Mammary epithelial cell (primary cell): ENCODE measurements at regions of chr1 and their contacts with region 1.

Region 1: DNA sequence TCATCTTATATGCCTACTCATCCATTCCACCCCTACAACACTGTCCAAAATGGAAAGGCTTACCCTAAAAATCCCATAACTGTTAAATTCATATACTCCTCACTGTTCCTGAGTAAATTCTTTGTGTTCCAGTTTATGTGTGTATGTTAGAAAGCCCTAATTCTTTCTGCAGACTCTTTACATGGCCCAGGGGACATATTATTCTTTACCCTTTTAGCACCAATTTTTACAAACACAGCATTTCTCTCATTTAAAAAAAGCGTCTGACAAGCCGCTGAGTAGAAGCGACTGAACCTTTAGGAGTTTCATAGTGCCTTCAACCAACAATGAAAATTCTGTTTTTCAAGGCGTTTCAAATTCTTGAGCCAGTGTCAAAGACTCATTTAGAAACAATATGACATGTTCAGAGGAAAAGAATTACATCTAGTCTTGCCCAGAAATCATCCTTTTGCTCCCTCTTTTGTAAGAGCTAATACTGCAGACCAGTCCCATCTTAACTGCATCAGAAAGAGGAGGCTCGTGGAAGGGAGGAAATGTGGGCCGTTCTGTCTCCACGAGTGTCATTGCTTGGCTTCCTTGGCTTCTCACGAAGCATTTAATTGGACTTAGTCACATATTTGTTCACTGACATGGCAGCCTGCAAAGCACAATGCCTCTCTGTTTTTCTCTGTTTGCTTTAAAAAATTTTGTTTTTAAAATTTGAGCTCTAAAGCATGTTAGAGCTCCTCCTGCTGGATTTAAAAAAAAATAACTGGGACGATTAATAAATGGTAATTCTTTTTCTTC is 21.3 kb upstream of the C1orf105 start:
- DNase-seq: peak; percentile 84
- H3K4me3 ChIP-seq: no peak overlapping the region
- H3K27ac ChIP-seq: peak overlapping the region; percentile 68
- H3K4me1 ChIP-seq: peaks cover 23% of the 10 kb centered on the region
- H3K27me3 ChIP-seq: no peaks in the 10 kb centered on the region
- CTCF ChIP-seq: peak; percentile 46 to 53

Region 2: DNA sequence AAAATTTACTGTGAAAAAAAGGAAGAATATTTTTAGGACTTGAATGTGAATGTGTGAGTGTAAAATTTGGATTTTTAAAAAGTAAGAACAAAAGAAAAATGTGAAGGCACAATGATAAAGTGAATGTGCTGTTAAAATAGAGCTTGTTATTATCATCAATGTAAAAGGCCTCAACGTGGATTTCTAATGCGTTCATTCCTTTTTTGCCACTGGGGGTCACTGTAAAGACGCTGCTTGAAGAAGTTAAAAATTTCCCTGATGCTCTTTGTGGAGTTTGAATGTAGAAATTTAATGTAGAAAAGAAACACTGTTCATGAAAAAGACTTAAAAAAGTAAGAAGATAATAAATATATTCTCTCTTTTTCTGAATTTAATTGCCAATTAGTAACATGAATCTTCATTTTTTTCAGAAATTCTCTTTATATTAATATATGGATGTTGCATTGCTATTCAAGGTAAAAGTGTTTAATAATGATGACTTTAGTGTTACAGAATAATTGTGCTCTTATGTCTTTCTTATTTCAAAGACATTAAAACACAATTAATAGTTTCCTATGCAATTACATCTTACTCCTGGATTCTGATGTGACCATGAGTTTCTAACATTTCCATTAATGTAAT is 396.3 kb before region 1 on chr1:
- CTCF ChIA-PET with region 1: interaction called, 8 read pairs
- dilution Hi-C with region 1: no loop called
- in situ Hi-C with region 1: loop called in 1 of 2 experiments (anchors 25 kb)
- intact Hi-C with region 1: loop called (anchors 1 kb)
- DNase-seq: peak; percentile 40
- H3K4me3 ChIP-seq: no peak overlapping the region
- H3K27ac ChIP-seq: no peak overlapping the region
- H3K4me1 ChIP-seq: peaks cover 45% of the 10 kb centered on the region
- H3K27me3 ChIP-seq: no peaks in the 10 kb centered on the region
- CTCF ChIP-seq: peak; percentile 76 to 80

Region 3: DNA sequence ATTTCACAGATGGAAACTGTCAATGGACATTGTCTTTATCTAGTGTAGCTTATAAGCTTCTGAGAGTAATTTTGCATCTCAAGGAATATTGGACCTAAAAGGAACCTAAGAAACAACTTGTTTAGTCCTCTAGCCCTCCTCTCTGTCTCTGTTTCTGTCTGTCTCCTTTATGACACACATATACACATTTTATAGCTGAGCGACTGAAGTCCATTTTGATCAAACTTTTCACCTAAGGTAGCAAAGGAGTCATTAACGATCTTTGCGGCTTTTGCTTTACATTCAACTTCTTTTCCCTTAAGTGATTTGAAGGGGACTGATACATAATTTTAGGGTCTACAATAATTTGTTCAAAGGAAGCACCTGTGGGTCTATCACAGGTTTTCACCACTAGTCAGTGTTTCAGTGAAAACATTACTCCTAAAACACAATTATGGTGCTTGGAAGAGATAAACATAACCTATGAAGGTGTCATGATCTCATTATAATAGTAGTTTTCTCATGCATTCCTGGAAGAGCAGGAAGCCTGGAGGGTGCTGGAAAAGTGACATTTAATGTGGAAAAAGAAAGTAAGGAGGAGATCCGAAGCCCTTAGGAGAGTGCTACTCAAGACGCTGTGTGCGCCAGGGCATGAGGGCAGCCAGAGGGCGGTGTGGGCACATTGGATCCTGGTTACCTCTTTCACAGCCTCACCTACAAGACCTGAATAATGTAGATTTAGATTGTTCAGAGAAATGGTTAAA is 309.2 kb before region 1 on chr1:
- CTCF ChIA-PET with region 1: no interaction called
- dilution Hi-C with region 1: loop called (anchors 25 kb)
- in situ Hi-C with region 1: loop called (anchors 10 to 25 kb)
- intact Hi-C with region 1: loop called (anchors 1 kb)
- DNase-seq: peak; percentile 53
- H3K4me3 ChIP-seq: no peak overlapping the region
- H3K27ac ChIP-seq: no peak overlapping the region
- H3K4me1 ChIP-seq: no peaks in the 10 kb centered on the region
- H3K27me3 ChIP-seq: no peaks in the 10 kb centered on the region
- CTCF ChIP-seq: peak; percentile 92 to 96

Region 4: DNA sequence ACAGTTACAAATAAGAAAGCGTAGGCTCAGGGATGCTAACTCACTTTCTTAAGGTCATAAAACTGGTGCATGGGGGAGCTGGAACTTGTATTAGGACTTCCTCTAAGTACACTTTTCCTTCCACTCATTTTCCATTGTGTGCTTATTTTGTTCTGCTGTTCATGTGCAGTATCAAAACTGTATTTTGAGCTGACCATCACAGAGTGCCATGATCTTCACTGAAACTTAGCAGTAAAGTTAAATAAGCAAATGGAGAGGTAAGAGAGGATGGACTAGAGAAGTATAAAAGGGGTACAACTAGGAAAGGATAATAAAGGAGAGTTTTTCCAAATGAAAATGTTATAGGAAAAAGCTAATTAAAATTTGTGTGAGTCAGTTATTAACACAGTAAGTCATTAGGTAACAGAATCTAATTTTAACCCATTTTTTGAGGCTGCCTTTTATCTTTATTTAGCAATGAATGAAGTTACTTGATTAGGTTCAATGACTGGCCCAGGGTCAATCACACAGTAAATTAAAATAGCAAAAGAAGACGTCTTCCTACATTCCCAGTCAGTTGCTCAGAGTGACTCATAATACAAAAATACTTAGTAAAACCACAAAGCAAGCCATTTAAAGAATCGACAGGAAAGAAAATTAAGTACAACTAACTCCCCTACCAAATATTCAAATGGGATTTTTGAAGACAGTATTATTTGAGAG is 144.5 kb before region 1 on chr1:
- CTCF ChIA-PET with region 1: no interaction called
- dilution Hi-C with region 1: no loop called
- in situ Hi-C with region 1: no loop called
- intact Hi-C with region 1: loop called (anchors 2 kb)
- DNase-seq: peak; percentile 85
- H3K4me3 ChIP-seq: no peak overlapping the region
- H3K27ac ChIP-seq: peak overlapping the region; percentile 63
- H3K4me1 ChIP-seq: peaks cover 19% of the 10 kb centered on the region
- H3K27me3 ChIP-seq: no peaks in the 10 kb centered on the region
- CTCF ChIP-seq: no peak

Region 5: GRCh38 chr1:172322219-172323061 is 76.7 kb before region 1 on chr1:
- CTCF ChIA-PET with region 1: no interaction called
- dilution Hi-C with region 1: no loop called
- in situ Hi-C with region 1: no loop called
- intact Hi-C with region 1: loop called (anchors 2 kb)
- DNase-seq: peak; percentile 67
- H3K4me3 ChIP-seq: peak overlapping the region; percentile 12 to 40 (median 32)
- H3K27ac ChIP-seq: peak overlapping the region; percentile 93
- H3K4me1 ChIP-seq: peaks cover 45% of the 10 kb centered on the region
- H3K27me3 ChIP-seq: no peaks in the 10 kb centered on the region
- CTCF ChIP-seq: peak in 1 of 2 donors; percentile 16

Region 6: GRCh38 chr1:172429331-172430127 is 30.4 kb after region 1 on chr1:
- CTCF ChIA-PET with region 1: interaction called, 11 read pairs
- dilution Hi-C with region 1: no loop called
- in situ Hi-C with region 1: no loop called
- intact Hi-C with region 1: loop called (anchors 1 kb)
- DNase-seq: peak; percentile 64
- H3K4me3 ChIP-seq: no peak overlapping the region
- H3K27ac ChIP-seq: no peak overlapping the region
- H3K4me1 ChIP-seq: peaks cover 12% of the 10 kb centered on the region
- H3K27me3 ChIP-seq: no peaks in the 10 kb centered on the region
- CTCF ChIP-seq: peak; percentile 80 to 86

Region 7: DNA sequence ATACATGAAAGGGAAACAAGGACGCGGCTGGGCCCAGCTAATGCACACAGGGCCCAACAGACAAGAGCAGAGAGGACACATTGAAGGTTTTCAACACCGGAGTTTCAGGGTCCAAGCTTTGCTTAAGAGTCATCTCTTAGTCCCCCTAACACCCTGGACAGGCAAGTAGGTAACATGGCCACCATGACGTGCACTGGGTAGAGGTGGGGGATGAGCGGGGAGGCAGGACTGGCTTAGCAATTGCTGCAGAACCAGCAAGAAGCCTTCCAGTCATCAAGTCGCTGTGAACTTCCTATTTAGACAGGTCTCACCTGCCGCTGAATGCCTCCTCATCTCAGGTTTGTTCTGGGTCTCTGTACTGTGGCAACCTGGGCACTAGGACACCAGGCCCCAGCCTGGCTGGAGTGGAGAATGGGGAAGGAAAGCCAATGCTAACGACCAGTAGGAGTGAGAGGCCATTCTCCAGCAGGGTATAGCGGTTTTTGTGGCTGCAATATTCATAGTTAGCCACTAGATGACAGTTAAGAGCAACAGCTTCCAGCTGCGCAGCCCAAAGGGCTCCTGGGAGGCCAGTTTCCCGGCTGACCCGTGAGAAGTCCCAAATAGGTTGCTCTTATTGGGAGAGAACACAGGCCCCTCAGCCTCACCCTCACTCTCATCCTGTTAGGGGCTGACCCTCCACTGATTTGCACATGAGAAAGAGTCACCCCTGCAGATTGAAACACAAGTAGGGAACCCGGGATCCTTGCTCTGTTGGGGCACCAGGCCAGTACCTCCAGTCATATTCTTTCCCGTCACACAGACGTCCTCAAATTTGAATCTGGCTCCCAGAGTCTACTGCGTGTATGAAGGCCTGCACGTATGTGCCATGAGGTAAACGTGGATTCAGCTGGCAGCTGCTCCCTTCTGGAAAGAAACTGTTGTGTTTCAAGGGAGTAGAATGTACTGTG is 50.7 kb after region 1 on chr1:
- CTCF ChIA-PET with region 1: no interaction called
- dilution Hi-C with region 1: no loop called
- in situ Hi-C with region 1: no loop called
- intact Hi-C with region 1: no loop called
- DNase-seq: peak; percentile 27
- H3K4me3 ChIP-seq: no peak overlapping the region
- H3K27ac ChIP-seq: no peak overlapping the region
- H3K4me1 ChIP-seq: peaks cover 35% of the 10 kb centered on the region
- H3K27me3 ChIP-seq: no peaks in the 10 kb centered on the region
- CTCF ChIP-seq: peak; percentile 83 to 86

Region 8: GRCh38 chr1:172515927-172516326 is 116.8 kb after region 1 on chr1:
- CTCF ChIA-PET with region 1: no interaction called
- dilution Hi-C with region 1: no loop called
- in situ Hi-C with region 1: no loop called
- intact Hi-C with region 1: no loop called
- DNase-seq: no peak
- H3K4me3 ChIP-seq: no peak overlapping the region
- H3K27ac ChIP-seq: no peak overlapping the region
- H3K4me1 ChIP-seq: no peaks in the 10 kb centered on the region
- H3K27me3 ChIP-seq: no peaks in the 10 kb centered on the region
- CTCF ChIP-seq: no peak